Psoas muscle (tissue), 8 donors: ENCODE measurements at regions of chr6 and their contacts with region 1.

Region 1: GRCh38 chr6:11700118-11700718 is 78.4 kb downstream of the ADTRP start:
- DNase-seq: no peak
- ATAC-seq: no peak
- H3K4me3 ChIP-seq: no peak overlapping the region
- H3K27ac ChIP-seq: no peak overlapping the region
- H3K4me1 ChIP-seq: no peaks in the 10 kb centered on the region
- H3K27me3 ChIP-seq: no peaks in the 10 kb centered on the region
- CTCF ChIP-seq: peak; percentile 52

Region 2: DNA sequence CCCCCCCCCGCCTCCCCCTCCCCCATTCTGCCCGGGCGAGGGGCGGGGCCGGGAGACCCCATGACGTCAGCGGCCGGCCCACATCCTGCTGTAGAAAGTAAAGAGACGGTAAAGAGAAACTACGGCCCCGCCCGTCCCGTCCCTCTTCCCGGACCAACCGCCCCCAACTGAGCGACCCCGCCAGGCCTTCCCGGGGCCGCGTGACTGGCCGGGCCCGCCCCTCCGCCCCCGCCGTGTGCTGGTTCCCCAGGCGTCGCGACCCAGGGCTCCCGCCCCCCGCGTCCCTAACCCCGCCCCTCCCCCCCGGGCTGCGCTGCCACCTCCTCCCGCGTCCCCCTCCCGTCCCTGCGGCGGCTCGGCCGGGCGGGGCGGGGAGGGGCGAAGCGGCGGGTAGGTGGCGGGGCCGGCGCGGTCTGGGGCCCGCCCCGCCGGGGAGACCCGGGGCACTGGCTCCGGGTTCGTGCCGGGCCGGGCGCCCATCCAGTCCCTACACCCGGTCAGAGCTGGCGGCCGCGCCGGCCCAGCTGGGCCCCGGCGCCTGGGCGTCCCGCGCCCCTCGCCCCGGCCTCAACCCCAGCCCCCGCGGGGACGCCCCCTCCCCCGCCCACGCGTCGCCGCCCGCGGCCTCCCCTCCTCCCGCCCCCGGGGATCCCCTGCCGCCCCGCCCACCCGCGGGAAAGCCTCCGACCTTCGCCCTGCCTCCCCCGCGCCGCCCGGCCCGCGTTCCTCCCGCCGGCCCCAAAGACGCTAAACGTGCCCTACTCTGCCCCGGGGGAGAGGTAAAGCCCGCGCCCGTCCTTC is 311.3 kb after region 1 on chr6:
- intact Hi-C with region 1: loop called in 1 of 2 experiments (anchors 10 kb)
- DNase-seq: peak; percentile 99
- ATAC-seq: peak; percentile 89 to 95 (median 92)
- H3K4me3 ChIP-seq: peak overlapping the region; percentile 88
- H3K27ac ChIP-seq: peak overlapping the region; percentile 96
- H3K4me1 ChIP-seq: peaks cover 27% of the 10 kb centered on the region
- H3K27me3 ChIP-seq: no peaks in the 10 kb centered on the region
- CTCF ChIP-seq: no peak